H1 (cell line): ENCODE measurements at regions of chr22 and their contacts with region 1.

Region 1: DNA sequence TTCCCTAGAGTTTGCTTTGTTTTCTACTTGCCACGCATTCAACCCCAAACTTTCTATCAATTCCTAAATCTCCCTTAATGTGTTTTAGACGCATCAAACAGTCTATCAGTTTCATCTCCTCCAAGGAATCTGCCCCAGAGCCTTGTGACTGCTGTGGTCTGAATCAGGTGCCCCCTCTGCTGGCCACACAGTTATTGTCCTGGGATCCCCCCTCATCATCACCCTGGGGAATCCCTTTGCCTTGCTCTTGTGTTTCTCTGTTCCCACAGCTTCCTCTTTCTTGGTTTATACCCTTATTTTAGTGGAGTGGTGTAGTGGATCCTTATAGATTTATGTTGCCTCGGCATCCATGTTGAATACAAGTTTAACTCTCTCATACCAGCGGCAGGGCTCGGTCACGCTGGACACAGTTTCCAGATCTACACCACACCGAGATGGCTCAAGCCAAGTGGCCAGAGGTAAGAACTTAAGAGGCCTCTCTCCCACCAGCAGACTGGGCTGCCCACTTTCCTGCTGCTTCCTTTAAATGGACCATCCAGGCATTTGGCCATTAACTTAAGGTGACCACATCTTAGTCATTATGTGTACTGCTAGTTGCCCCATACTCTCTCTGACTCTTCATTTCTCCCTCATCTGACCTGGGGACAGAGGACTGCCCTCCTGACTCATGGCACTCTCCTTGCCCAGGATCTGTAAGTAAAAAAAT is 8.2 kb downstream of the UPB1 start:
- DNase-seq: peak in 1 of 2 experiments; percentile 83
- H3K4me3 ChIP-seq: no peak overlapping the region
- H3K27ac ChIP-seq: no peak overlapping the region
- H3K4me1 ChIP-seq: peaks cover 3 to 15% (median 9%) of the 10 kb centered on the region in 4 experiments; a peak in 5 of 7 replicates
- H3K27me3 ChIP-seq: peaks cover 0 to 2% (median 0%) of the 10 kb centered on the region in 4 experiments; a peak in 3 of 7 replicates
- CTCF ChIP-seq: peak; percentile 80 to 87 (median 82)
- EP300 ChIP-seq: no peak
- POLR2A ChIP-seq: no peak
- RAD21 ChIP-seq: peak; percentile 74 to 83

Region 2: DNA sequence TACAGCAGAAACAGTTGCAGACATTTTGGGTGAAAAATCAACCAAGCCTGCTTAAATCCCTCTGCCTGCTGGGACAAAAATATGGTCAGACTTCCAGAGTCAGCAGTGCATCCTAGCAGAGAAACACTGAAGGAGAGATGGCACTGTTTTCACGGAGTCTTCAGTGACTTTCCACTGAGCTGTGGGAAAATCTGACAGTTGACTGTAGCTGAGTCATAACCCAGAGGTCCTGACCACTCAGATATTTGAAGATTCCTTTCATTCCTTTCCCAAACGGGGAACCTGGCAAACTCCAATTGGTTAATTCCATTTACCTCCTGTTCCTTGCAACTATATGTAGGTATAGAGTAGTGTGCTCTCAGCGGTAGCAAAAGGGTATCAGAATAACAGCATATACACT is 29.1 kb before region 1 on chr22:
- CTCF ChIA-PET with region 1: interaction called, 10 read pairs
- POLR2A ChIA-PET with region 1: no interaction called
- DNase-seq: no peak
- H3K4me3 ChIP-seq: no peak overlapping the region
- H3K27ac ChIP-seq: no peak overlapping the region
- H3K4me1 ChIP-seq: no peaks in the 10 kb centered on the region
- H3K27me3 ChIP-seq: no peaks in the 10 kb centered on the region
- CTCF ChIP-seq: no peak
- EP300 ChIP-seq: no peak
- POLR2A ChIP-seq: no peak
- RAD21 ChIP-seq: no peak

Region 3: DNA sequence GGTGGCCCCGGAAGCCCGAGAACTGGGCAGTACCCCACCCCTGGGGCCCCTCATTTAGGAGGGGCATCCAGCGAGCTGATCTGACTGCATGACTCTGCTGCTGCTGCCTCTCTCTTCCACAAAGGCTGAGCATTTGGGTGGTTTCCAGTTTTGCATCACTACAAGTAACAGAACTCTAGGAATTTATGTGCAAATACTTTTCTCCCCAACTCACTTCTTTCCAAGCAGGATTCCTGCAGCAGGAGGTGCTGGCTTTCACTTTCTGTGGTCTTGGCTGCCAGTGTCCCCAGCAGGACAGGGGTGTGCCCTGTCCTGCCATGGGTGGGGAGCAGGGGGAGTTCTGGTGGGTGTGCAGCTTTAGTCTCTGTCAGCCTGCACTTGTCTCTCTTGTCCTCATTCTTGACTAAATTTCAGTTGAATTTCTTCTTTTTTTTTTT is 13.0 kb after region 1 on chr22:
- CTCF ChIA-PET with region 1: interaction called, 70 read pairs
- POLR2A ChIA-PET with region 1: interaction called, 3 read pairs
- DNase-seq: no peak
- H3K4me3 ChIP-seq: no peak overlapping the region
- H3K27ac ChIP-seq: no peak overlapping the region
- H3K4me1 ChIP-seq: peaks cover 0 to 6% (median 1%) of the 10 kb centered on the region in 4 experiments; a peak in 2 of 7 replicates
- H3K27me3 ChIP-seq: no peaks in the 10 kb centered on the region
- CTCF ChIP-seq: no peak
- EP300 ChIP-seq: no peak
- POLR2A ChIP-seq: no peak
- RAD21 ChIP-seq: no peak

Region 4: GRCh38 chr22:24564376-24565058 is 61.2 kb after region 1 on chr22:
- CTCF ChIA-PET with region 1: no interaction called
- POLR2A ChIA-PET with region 1: no interaction called
- DNase-seq: no peak
- H3K4me3 ChIP-seq: no peak overlapping the region
- H3K27ac ChIP-seq: no peak overlapping the region
- H3K4me1 ChIP-seq: no peaks in the 10 kb centered on the region
- H3K27me3 ChIP-seq: no peaks in the 10 kb centered on the region
- CTCF ChIP-seq: no peak
- EP300 ChIP-seq: no peak
- POLR2A ChIP-seq: no peak
- RAD21 ChIP-seq: no peak